ENCODE measurements at regions of chr2 and their contacts with region 1.

Region 1: GRCh38 chr2:26668856-26669750 is 23.4 kb upstream of the KCNK3 start:
- DNase-seq: no peak
- H3K4me3 ChIP-seq: no peak overlapping the region
- H3K27ac ChIP-seq: no peak overlapping the region
- H3K4me1 ChIP-seq: peaks cover 0 to 3% of the 10 kb centered on the region in 2 experiments; a peak in 1 of 4 replicates
- H3K27me3 ChIP-seq: peaks cover 23% of the 10 kb centered on the region; the same call in 1 of the 2 replicates
- CTCF ChIP-seq: no peak
- EP300 ChIP-seq: no peak; a peak in 1 of 4 replicates
- RAD21 ChIP-seq: no peak

Region 2: DNA sequence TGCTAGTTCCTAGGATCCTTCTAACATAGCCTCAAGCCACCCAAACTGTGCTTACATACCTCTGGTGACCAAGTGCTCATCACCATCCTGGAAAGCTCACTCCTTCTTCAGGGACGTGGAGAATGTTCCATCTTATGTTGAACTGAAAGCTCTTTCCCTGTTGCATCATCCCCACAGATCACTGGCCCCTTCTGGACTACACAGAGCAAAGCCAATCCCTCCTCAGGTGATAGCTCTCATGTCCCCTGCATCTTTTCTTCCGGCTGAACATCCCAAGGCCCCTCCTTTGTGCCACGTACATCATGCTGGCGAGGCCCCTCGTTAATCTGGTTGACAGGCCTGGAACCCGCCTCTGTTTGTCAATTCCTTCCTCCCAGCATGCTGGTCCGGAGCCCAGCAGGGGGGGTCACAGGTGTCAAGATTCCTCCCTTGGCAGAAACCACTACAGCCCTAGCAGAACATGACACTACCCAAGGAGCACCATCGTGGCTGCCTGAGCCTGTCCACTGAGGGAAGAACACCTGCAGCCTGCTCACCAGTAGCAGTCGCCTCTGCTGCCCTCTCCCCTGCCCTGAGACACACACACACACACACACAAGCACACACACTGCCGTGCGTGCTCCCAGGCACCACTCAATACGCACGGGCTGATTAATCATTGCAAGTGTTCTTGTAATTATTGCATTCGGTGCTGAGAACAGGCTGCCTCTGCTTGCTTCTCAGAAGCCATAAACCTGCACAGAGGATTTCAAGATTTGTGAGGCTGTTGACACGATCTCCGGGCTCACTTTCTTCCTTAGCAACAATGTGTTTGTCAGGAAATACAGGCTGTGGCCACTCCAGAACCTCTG is 17.1 kb after region 1 on chr2:
- CTCF ChIA-PET with region 1: interaction called, 12 read pairs
- POLR2A ChIA-PET with region 1: no interaction called
- DNase-seq: no peak
- H3K4me3 ChIP-seq: no peak overlapping the region
- H3K27ac ChIP-seq: no peak overlapping the region
- H3K4me1 ChIP-seq: peaks cover 0 to 49% of the 10 kb centered on the region in 2 experiments; a peak in 2 of 4 replicates
- H3K27me3 ChIP-seq: peaks cover 60% of the 10 kb centered on the region
- CTCF ChIP-seq: no peak
- EP300 ChIP-seq: no peak
- RAD21 ChIP-seq: no peak